ENCODE measurements at regions of chr4 and their contacts with region 1.

Region 1: GRCh38 chr4:38319456-38320342 is 344.3 kb upstream of the KLF3 start:
- DNase-seq: peak; percentile 88 to 100 (median 95)
- ATAC-seq: peak; percentile 82 to 95 (median 90)
- H3K4me3 ChIP-seq: peak overlapping the region in 2 of 4 donors; percentile 15 to 26
- H3K27ac ChIP-seq: peak overlapping the region; percentile 35 to 91 (median 68)
- H3K4me1 ChIP-seq: peaks cover 12 to 18% (median 15%) of the 10 kb centered on the region in 3 donors
- H3K27me3 ChIP-seq: no peaks in the 10 kb centered on the region
- CTCF ChIP-seq: peak; percentile 94 to 98 (median 98)

Region 2: DNA sequence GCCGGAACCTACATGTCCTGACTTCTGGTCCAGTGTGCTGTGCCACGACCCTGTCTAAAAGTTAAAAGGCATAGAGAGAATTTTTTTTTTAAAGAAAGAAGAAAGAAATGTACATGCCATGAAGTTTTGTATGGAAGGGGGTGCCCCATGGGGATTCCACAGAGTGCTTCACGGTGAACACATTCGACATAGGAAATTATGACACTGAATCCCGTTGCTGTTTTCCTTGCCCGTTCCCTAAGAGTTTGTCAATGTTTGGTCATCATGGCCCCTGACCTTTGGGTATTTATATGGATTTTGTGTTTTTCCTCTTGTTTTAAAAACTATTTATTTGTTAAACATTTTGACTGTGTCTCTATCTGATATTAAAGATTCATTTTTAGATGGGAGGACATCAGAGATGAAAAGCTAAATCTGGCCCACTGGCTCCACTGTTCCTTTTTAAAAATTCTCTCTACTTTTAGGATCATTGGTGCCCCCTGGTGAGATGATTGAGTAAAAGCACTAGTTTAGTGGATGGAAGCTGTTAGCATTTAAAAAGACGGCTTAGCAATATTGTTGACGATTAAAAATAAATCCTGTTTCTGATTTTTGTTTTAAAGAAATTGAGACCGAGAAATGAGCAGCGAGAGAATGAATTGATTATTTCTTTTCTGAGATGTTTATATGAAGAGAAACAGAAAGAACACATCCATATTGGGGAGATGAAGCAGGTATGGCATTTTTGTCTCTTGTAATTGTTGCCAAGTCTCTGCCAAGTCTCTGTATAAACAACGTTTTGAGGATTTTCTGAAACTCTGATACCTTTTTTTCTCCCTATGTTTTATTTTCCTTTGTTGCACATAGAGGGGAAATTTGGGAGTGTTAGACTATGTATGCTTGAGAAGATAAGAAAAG is 284.5 kb before region 1 on chr4:
- intact Hi-C with region 1: no loop called
- DNase-seq: peak in 1 of 6 donors; percentile 40
- ATAC-seq: peak in 3 of 4 donors; percentile 76 to 84 (median 82)
- H3K4me3 ChIP-seq: no peak overlapping the region
- H3K27ac ChIP-seq: no peak overlapping the region
- H3K4me1 ChIP-seq: no peaks in the 10 kb centered on the region
- H3K27me3 ChIP-seq: no peaks in the 10 kb centered on the region
- CTCF ChIP-seq: peak; percentile 25 to 39 (median 31)

Region 3: GRCh38 chr4:38078590-38079421 is 240.9 kb before region 1 on chr4:
- intact Hi-C with region 1: loop called in 1 of 3 experiments (anchors 10 kb)
- DNase-seq: no peak
- ATAC-seq: peak in 3 of 4 donors; percentile 29 to 62 (median 37)
- H3K4me3 ChIP-seq: no peak overlapping the region
- H3K27ac ChIP-seq: peak overlapping the region in 2 of 4 donors; percentile 43 to 66
- H3K4me1 ChIP-seq: peaks cover 0 to 16% (median 0%) of the 10 kb centered on the region in 3 donors
- H3K27me3 ChIP-seq: no peaks in the 10 kb centered on the region
- CTCF ChIP-seq: no peak

Region 4: DNA sequence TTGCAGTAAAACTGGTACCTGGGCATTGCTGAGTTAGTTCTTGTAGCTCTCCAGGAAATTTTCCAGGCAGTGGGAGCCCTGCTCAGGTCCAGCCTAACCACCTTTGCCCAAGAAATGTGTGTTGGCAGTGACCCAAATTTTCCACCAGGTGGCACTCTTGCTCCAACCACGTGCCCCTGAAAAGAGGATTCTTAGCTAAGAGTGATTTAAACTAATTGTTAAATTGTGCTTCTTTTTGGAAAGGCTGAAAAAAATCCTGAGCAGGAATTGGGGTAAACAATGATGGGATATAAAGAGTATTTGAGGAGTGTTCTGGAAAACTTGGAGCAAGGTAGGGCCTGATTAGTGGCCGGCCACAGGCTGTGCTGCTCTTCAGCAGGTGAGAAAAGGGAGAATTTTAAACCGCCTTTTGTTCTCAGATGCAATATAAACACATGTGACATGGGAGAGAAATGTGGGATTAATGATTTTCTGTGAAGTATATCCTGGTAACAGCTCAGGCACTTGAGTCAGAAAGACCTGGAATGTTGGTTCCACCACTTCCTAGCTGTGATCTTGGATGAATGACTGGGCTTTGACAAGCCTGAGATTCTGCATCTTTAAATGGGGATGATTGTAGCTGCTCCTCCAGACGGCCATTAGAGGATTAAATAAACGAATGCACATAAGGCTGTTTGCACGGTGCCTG is 139.9 kb before region 1 on chr4:
- intact Hi-C with region 1: loop called in 1 of 3 experiments (anchors 10 kb)
- DNase-seq: peak; percentile 76 to 87 (median 78)
- ATAC-seq: peak; percentile 74 to 80 (median 80)
- H3K4me3 ChIP-seq: no peak overlapping the region
- H3K27ac ChIP-seq: peak overlapping the region in 1 of 4 donors; percentile 57
- H3K4me1 ChIP-seq: peaks cover 10 to 20% (median 17%) of the 10 kb centered on the region in 3 donors
- H3K27me3 ChIP-seq: no peaks in the 10 kb centered on the region
- CTCF ChIP-seq: peak; percentile 68 to 88 (median 84)

Region 5: GRCh38 chr4:38387348-38387747 is 67.6 kb after region 1 on chr4:
- intact Hi-C with region 1: loop called in 1 of 3 experiments (anchors 10 kb)
- DNase-seq: peak in 4 of 6 donors; percentile 36 to 80 (median 51)
- ATAC-seq: peak; percentile 47 to 64 (median 56)
- H3K4me3 ChIP-seq: no peak overlapping the region
- H3K27ac ChIP-seq: peak overlapping the region in 3 of 4 donors; percentile 22 to 73 (median 59)
- H3K4me1 ChIP-seq: peaks cover 18 to 33% (median 32%) of the 10 kb centered on the region in 3 donors
- H3K27me3 ChIP-seq: no peaks in the 10 kb centered on the region
- CTCF ChIP-seq: no peak

Region 6: DNA sequence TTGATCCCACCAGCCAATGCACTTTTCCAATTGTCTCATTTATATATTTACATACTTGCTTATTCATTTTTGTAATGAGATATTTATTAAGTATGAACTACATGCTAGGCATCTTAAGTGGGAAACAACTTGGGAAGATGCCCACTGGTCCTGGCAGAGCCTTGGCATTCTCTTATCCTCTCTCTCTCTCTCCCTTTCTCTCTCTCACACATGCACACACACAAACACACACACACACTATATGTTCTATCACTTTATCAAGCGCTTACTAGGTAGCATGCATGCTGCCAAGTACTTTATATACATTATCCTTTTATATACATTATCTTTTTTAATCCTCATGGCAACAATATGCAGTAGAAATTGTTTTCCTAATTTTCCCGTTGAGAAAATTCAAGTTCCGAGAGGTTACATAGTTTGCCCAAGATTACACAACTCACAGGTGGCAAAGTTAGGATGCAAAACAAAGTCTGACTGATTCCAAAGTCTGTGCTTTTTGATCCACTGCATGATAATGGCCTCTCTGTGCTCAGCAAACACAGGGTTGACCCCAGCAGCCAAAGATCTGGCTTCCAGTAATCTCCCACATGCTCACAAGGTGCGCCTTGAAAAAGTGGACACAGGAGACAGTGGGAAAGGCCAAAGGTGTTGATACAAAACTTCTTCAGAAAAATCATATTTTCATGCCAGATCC is 171.2 kb after region 1 on chr4:
- intact Hi-C with region 1: no loop called
- DNase-seq: no peak
- ATAC-seq: peak in 3 of 4 donors; percentile 48 to 53 (median 50)
- H3K4me3 ChIP-seq: no peak overlapping the region
- H3K27ac ChIP-seq: no peak overlapping the region
- H3K4me1 ChIP-seq: peaks cover 0 to 5% (median 0%) of the 10 kb centered on the region in 3 donors
- H3K27me3 ChIP-seq: no peaks in the 10 kb centered on the region
- CTCF ChIP-seq: no peak

Region 7: GRCh38 chr4:38675146-38676121 is 355.7 kb after region 1 on chr4:
- intact Hi-C with region 1: loop called in 2 of 3 experiments (anchors 10 kb)
- DNase-seq: peak in 5 of 6 donors; percentile 62 to 81 (median 72)
- ATAC-seq: peak; percentile 58 to 76 (median 66)
- H3K4me3 ChIP-seq: peak overlapping the region in 1 of 4 donors; percentile 8
- H3K27ac ChIP-seq: peak overlapping the region in 3 of 4 donors; percentile 63 to 99 (median 74)
- H3K4me1 ChIP-seq: peaks cover 43 to 67% (median 50%) of the 10 kb centered on the region in 3 donors
- H3K27me3 ChIP-seq: no peaks in the 10 kb centered on the region
- CTCF ChIP-seq: peak; percentile 65 to 84 (median 78)

Region 8: GRCh38 chr4:38681281-38681991 is 361.7 kb after region 1 on chr4:
- intact Hi-C with region 1: loop called in 2 of 3 experiments (anchors 10 kb)
- DNase-seq: no peak
- ATAC-seq: no peak
- H3K4me3 ChIP-seq: no peak overlapping the region
- H3K27ac ChIP-seq: no peak overlapping the region
- H3K4me1 ChIP-seq: peaks cover 6 to 17% (median 15%) of the 10 kb centered on the region in 3 donors
- H3K27me3 ChIP-seq: no peaks in the 10 kb centered on the region
- CTCF ChIP-seq: no peak